ENCODE measurements at regions of chr13 and their contacts with region 1.

Region 1: DNA sequence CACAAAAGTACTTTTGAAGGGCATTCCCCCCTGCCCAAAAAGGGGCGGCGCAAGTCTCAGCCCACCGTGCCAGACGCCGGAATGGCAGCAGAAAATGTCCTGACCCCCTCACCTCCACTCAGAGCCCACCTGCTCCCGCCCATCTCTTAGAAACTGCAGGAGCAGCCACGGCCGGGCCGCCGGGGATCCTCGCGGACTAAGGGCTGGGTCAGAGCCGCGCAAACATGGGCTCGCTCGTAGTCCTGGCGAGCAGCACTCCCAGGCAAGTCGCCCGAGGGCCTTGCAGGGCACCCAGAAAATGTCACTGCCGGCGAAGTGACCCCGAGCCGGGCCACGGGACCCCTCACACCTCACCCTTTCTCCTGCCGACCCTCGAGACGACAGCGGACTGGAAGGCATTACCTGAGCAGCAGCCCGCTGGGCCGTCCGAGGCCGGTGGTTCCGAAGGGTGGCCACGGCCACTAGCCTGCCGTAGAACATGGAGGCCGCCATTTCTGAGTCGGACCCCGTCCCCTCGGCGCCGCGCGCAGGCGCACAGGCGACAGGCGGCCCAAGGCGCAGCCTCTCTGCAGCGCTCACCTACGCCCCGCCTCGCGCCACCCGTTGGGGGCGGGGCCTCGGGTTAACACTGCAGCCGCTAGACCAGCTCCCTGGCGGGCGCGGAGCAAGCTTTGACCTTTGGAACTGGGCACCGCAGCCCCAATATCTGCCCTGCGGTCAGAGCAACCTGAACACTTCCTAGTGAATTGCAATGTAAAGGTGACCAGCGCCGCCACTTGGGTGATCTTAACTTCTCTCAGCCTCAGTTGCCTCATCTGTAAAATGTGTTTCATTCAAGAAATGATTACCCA is at the start of gene SUCLA2:
- DNase-seq: peak; percentile 92
- H3K4me3 ChIP-seq: peak within 1 kb of the TSS; percentile 73 to 99 (median 95)
- H3K27ac ChIP-seq: peak within 1 kb of the TSS; percentile 82 to 90 (median 84)
- H3K4me1 ChIP-seq: peaks cover 0 to 46% (median 21%) of the 10 kb centered on the region in 4 donors
- H3K27me3 ChIP-seq: no peaks in the 10 kb centered on the region
- CTCF ChIP-seq: peak in 1 of 4 experiments; percentile 0
- EP300 ChIP-seq: no peak
- POLR2A ChIP-seq: no peak
- total RNA-seq, gene SUCLA2: 34.9 to 62.1 (median 44.2) TPM

Region 2: GRCh38 chr13:48037346-48038173 is 36.6 kb after region 1 on chr13 and contains the start of gene NUDT15:
- intact Hi-C with region 1: loop called (anchors 5 kb)
- DNase-seq: peak; percentile 96
- H3K4me3 ChIP-seq: peak within 1 kb of the TSS; percentile 62 to 78 (median 77)
- H3K27ac ChIP-seq: peak within 1 kb of the TSS; percentile 91 to 97 (median 96)
- H3K4me1 ChIP-seq: peaks cover 0 to 14% (median 14%) of the 10 kb centered on the region in 4 donors
- H3K27me3 ChIP-seq: no peaks in the 10 kb centered on the region
- CTCF ChIP-seq: peak; percentile 88 to 98 (median 98)
- EP300 ChIP-seq: peak in 3 of 4 donors; percentile 33 to 81 (median 76)
- POLR2A ChIP-seq: peak; percentile 59 to 66
- total RNA-seq, gene NUDT15: 6.6 to 8.9 (median 7.8) TPM